K562 (cell line): ENCODE measurements at regions of chr7 and their contacts with region 1.

Region 1: DNA sequence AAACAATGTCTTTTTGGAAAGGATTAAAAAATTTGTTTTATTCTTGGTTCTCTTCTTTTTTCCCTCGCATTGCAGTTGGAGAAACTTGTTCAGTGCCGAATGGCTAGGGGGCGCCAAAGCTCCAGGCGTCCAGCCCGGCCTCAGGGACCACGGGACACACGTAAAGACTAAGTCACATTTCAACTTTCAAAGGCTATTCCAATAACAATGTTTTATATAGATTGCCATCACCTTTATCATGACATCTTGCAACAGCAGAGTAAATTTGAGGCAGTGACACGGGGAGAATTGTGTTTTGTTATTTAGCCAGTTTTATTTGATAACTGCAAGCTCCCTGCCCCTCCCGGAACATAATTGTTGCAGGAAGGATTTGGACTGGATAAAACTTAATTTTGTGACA is 2.2 kb upstream of the IGFBP3 start:
- DNase-seq: peak; percentile 48 to 66 (median 48)
- ATAC-seq: peak; percentile 89
- H3K4me3 ChIP-seq: no peak overlapping the region
- H3K27ac ChIP-seq: no peak overlapping the region
- H3K4me1 ChIP-seq: no peaks in the 10 kb centered on the region
- H3K27me3 ChIP-seq: peaks cover 0 to 4% of the 10 kb centered on the region in 2 experiments; a peak in 2 of 5 replicates
- CTCF ChIP-seq: peak; percentile 73 to 85 (median 76)
- EP300 ChIP-seq: no peak
- POLR2A ChIP-seq: no peak
- RAD21 ChIP-seq: peak; percentile 75 to 76

Region 2: GRCh38 chr7:46352004-46352954 is 429.0 kb after region 1 on chr7:
- CTCF ChIA-PET with region 1: no interaction called
- POLR2A ChIA-PET with region 1: no interaction called
- in situ Hi-C with region 1: no loop called
- intact Hi-C with region 1: loop called (anchors 10 kb)
- DNase-seq: peak in 3 of 4 experiments; percentile 13 to 16 (median 15)
- ATAC-seq: no peak
- H3K4me3 ChIP-seq: no peak overlapping the region
- H3K27ac ChIP-seq: no peak overlapping the region
- H3K4me1 ChIP-seq: no peaks in the 10 kb centered on the region
- H3K27me3 ChIP-seq: no peaks in the 10 kb centered on the region
- CTCF ChIP-seq: peak in 2 of 3 experiments; percentile 16 to 24; a peak in 1 of 6 replicates
- EP300 ChIP-seq: no peak
- POLR2A ChIP-seq: no peak
- RAD21 ChIP-seq: peak in 1 of 2 experiments; percentile 51; a peak in 2 of 4 replicates

Region 3: DNA sequence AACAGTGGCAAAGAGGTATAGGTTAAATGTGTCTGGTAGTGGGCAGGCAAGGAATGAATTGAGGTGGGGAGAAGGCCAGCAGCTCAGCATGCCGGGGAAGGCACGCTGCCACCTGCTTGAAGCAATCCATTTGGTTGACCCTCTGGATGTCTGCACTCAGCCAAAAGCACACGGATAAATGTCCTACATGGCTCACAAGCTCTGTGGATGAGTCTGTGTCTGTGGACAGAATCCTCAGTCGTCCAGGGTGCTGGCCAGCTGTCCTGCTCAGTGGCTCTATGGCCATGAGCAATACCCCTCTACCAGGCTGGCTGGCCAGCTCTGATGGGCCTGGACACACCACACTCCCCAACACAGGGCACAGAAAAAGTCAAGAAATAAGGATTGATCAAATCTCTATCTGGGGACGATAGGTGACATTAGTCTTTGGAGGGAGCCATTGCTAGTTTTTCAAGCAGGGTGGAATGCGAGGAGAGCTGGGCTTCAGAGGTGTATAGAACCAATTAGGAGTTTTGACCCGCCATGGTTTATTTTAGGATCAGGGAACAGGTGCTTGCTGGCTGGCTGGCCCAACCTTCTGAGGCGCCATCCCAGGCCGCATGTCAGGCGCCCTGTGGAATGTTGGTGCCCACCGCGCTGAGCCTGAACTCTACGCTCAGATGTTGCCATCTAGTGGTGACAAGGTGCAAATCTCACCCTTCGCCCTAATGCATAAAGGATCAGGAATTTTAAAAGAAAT is 1165.2 kb after region 1 on chr7:
- CTCF ChIA-PET with region 1: interaction called, 3 read pairs
- POLR2A ChIA-PET with region 1: no interaction called
- in situ Hi-C with region 1: loop called (anchors 10 kb)
- intact Hi-C with region 1: loop called (anchors 2 kb)
- DNase-seq: peak; percentile 51 to 66 (median 60)
- ATAC-seq: peak; percentile 94
- H3K4me3 ChIP-seq: no peak overlapping the region
- H3K27ac ChIP-seq: no peak overlapping the region
- H3K4me1 ChIP-seq: no peaks in the 10 kb centered on the region
- H3K27me3 ChIP-seq: no peaks in the 10 kb centered on the region
- CTCF ChIP-seq: peak; percentile 70 to 82 (median 78)
- EP300 ChIP-seq: no peak
- POLR2A ChIP-seq: no peak
- RAD21 ChIP-seq: peak; percentile 84 to 87

Region 4: DNA sequence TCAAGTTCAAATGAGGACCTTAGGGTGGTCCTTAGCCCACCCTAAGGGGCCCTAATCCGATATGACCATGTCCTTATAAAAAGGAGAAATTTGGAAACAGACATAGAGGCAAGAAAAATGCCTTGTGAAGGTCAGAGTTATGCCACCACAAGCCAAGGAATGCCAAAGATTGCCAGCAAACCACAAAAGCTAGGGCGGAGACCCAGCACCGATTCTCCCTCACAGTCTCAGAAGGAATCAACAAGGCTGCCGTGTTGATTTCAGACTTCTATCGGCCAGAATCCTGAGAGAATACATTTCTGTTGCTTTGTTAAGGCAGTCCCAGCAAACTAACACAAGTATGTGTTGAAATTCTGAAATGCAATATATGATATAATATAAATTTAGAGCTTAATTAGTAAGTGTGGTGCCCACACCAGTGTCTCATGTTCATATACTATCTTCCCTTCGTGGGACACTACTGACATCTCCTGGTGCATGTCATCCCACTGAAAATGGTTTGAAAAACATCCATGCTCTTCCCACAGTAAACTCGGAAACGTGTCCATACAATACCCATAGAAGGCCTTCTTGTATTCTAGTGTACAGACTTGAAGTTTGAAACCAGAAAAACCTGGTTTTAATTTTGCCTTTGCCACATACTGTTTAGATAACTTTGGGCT is 1309.6 kb after region 1 on chr7:
- CTCF ChIA-PET with region 1: no interaction called
- POLR2A ChIA-PET with region 1: no interaction called
- in situ Hi-C with region 1: no loop called
- intact Hi-C with region 1: loop called (anchors 2 kb)
- DNase-seq: peak in 2 of 4 experiments; percentile 35 to 50
- ATAC-seq: peak; percentile 60; the same call in 2 of the 3 replicates
- H3K4me3 ChIP-seq: no peak overlapping the region
- H3K27ac ChIP-seq: no peak overlapping the region
- H3K4me1 ChIP-seq: peaks cover 7% of the 10 kb centered on the region in 2 experiments; a peak in 4 of 5 replicates
- H3K27me3 ChIP-seq: no peaks in the 10 kb centered on the region
- CTCF ChIP-seq: peak; percentile 34 to 75 (median 64)
- EP300 ChIP-seq: no peak
- POLR2A ChIP-seq: no peak
- RAD21 ChIP-seq: peak; percentile 85 to 87